Natural killer cell (primary cell): ENCODE measurements at regions of chr7 and their contacts with region 1.

Region 1: GRCh38 chr7:92833024-92833765 is 3.2 kb downstream of the CDK6 start:
- DNase-seq: peak; percentile 83 to 94
- ATAC-seq: peak; percentile 69 to 86 (median 80)
- H3K4me3 ChIP-seq: peak overlapping the region; percentile 55
- H3K4me3 Mint-ChIP-seq: peak overlapping the region; percentile 100
- H3K27ac ChIP-seq: peak overlapping the region; percentile 70
- H3K27ac Mint-ChIP-seq: peak overlapping the region; percentile 88 to 94
- H3K4me1 ChIP-seq: peaks cover 18% of the 10 kb centered on the region
- H3K4me1 Mint-ChIP-seq: peaks cover 59 to 67% of the 10 kb centered on the region in 2 donors
- H3K27me3 ChIP-seq: no peaks in the 10 kb centered on the region
- H3K27me3 Mint-ChIP-seq: no peaks in the 10 kb centered on the region
- CTCF ChIP-seq: peak; percentile 88

Region 2: GRCh38 chr7:92691578-92691977 is 141.6 kb before region 1 on chr7:
- intact Hi-C with region 1: loop called (anchors 1 kb)
- DNase-seq: peak in 1 of 2 donors; percentile 68
- ATAC-seq: peak; percentile 63 to 88 (median 86)
- H3K4me3 ChIP-seq: no peak overlapping the region
- H3K4me3 Mint-ChIP-seq: peak overlapping the region; percentile 45
- H3K27ac ChIP-seq: no peak overlapping the region
- H3K27ac Mint-ChIP-seq: peak overlapping the region; percentile 44 to 73
- H3K4me1 ChIP-seq: peaks cover 3% of the 10 kb centered on the region
- H3K4me1 Mint-ChIP-seq: peaks cover 56 to 61% of the 10 kb centered on the region in 2 donors
- H3K27me3 ChIP-seq: no peaks in the 10 kb centered on the region
- H3K27me3 Mint-ChIP-seq: no peaks in the 10 kb centered on the region
- CTCF ChIP-seq: peak; percentile 61

Region 3: DNA sequence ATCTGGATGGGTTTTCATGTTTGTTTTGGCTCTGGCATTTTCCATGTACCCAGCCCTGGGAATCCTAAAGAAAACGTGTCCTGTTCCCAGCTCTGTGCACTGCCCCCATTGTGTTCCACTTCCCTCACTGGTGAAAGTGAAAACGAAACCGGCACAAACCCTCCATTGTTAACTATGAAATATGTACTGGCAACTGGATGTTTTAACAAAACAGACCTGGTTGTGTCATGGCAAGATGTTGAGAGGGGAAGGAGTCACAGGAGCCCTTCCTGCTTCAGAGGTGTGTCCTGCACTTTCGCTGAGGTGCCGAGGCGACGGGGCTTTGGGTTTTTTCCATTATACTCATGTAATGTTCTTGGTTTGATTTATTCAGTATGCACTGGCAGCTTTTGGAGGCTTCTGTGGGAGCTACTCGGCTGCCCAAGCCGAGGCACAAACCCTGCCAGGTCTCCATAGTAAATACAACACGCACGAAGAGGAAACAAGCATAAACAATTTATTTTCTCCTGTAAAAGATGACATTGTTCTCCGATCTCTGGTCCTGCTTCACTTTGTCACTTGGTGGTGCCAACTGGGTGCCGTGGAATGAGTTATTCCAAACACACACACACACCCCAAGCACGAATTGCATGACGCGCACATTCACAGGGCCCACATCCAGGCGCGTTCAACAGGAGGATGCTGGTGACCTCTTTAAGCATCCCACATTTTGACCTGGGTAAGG is 115.0 kb before region 1 on chr7:
- intact Hi-C with region 1: loop called (anchors 1 kb)
- DNase-seq: peak; percentile 44 to 71
- ATAC-seq: peak; percentile 89 to 92 (median 91)
- H3K4me3 ChIP-seq: peak overlapping the region; percentile 28
- H3K4me3 Mint-ChIP-seq: peak overlapping the region; percentile 78
- H3K27ac ChIP-seq: peak overlapping the region; percentile 82
- H3K27ac Mint-ChIP-seq: peak overlapping the region; percentile 84
- H3K4me1 ChIP-seq: peaks cover 13% of the 10 kb centered on the region
- H3K4me1 Mint-ChIP-seq: peaks cover 25 to 47% of the 10 kb centered on the region in 2 donors
- H3K27me3 ChIP-seq: no peaks in the 10 kb centered on the region
- H3K27me3 Mint-ChIP-seq: no peaks in the 10 kb centered on the region
- CTCF ChIP-seq: no peak

Region 4: GRCh38 chr7:92904292-92905131 is 71.3 kb after region 1 on chr7:
- intact Hi-C with region 1: loop called (anchors 1 kb)
- DNase-seq: peak; percentile 65 to 80
- ATAC-seq: peak; percentile 98 to 100 (median 99)
- H3K4me3 ChIP-seq: no peak overlapping the region
- H3K4me3 Mint-ChIP-seq: no peak overlapping the region
- H3K27ac ChIP-seq: no peak overlapping the region
- H3K27ac Mint-ChIP-seq: peak overlapping the region; percentile 62 to 64
- H3K4me1 ChIP-seq: peaks cover 9% of the 10 kb centered on the region
- H3K4me1 Mint-ChIP-seq: peaks cover 18 to 19% of the 10 kb centered on the region in 2 donors
- H3K27me3 ChIP-seq: no peaks in the 10 kb centered on the region
- H3K27me3 Mint-ChIP-seq: peaks cover 0 to 3% of the 10 kb centered on the region in 2 donors
- CTCF ChIP-seq: no peak